Breast epithelium (tissue), 4 donors: ENCODE measurements at regions of chr12 and their contacts with region 1.

Region 1: DNA sequence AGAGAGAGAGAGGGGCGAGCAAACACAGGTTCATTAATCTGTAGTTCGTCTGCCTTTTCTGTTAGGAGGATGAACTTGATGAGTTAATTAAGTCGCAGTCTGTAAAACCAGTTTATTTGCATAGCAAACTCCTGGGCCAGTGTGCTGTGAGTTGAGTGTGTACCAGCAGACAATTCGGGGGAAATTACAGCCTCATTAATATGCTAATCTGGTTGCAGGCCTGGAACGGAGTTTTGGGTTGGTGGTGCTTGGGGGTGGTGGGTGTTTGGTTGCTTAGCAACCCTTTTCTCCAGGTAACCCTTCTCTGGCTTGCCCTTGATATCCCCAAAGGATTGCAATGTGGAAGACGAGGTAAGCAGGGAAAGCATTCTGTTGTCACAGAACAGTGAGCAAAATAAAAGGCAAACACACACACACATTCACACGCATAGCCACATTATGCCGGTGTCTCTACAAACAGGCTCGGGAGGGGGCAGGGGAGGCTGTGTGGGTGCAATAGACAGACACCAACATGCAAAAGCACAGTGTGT is 29.2 kb upstream of the LHX5 start:
- DNase-seq: no peak
- H3K4me3 ChIP-seq: no peak overlapping the region
- H3K27ac ChIP-seq: no peak overlapping the region
- H3K4me1 ChIP-seq: no peaks in the 10 kb centered on the region
- H3K27me3 ChIP-seq: peaks cover 0 to 56% of the 10 kb centered on the region in 2 donors
- CTCF ChIP-seq: no peak
- POLR2A ChIP-seq: no peak

Region 2: DNA sequence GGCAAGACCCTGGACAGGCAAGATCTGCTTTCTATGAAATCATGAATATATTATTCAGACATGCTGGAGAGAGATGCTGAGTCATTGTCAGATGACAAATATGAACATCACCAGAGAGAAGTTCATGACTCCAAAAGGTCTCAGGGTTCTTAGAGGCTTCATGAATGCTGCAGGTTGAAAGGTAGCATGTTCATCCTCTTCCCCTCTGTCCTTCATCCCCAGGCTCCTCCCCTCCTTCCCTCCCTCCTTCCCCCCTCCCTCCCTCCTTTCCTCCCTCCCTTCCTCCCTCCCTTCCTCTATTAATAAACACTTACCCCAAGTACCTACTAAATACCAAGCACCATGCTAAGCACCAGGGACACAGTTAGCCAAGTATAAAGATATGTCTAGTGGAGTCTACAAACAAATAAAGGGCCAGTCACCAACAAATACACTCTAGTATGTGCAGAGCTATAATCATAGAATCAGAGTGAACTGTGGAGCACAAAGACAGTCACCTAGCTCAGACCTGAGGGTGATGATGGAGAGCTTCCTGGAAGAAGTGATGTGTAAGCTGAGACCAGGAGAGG is 663.1 kb before region 1 on chr12:
- intact Hi-C with region 1: loop called (anchors 10 kb)
- DNase-seq: no peak
- H3K4me3 ChIP-seq: no peak overlapping the region
- H3K27ac ChIP-seq: no peak overlapping the region
- H3K4me1 ChIP-seq: no peaks in the 10 kb centered on the region
- H3K27me3 ChIP-seq: no peaks in the 10 kb centered on the region
- CTCF ChIP-seq: no peak
- POLR2A ChIP-seq: no peak